ENCODE measurements at regions of chr2 and their contacts with region 1.

Region 1: GRCh38 chr2:9895669-9896595 is 52.7 kb downstream of the TAF1B start:
- DNase-seq: no peak
- H3K4me3 ChIP-seq: no peak overlapping the region
- H3K27me3 ChIP-seq: no peaks in the 10 kb centered on the region
- CTCF ChIP-seq: no peak

Region 2: GRCh38 chr2:9867881-9868280 is 28.1 kb before region 1 on chr2:
- CTCF ChIA-PET with region 1: no interaction called
- POLR2A ChIA-PET with region 1: interaction called, 10 read pairs
- DNase-seq: no peak
- H3K4me3 ChIP-seq: no peak overlapping the region
- H3K27me3 ChIP-seq: no peaks in the 10 kb centered on the region
- CTCF ChIP-seq: no peak

Region 3: DNA sequence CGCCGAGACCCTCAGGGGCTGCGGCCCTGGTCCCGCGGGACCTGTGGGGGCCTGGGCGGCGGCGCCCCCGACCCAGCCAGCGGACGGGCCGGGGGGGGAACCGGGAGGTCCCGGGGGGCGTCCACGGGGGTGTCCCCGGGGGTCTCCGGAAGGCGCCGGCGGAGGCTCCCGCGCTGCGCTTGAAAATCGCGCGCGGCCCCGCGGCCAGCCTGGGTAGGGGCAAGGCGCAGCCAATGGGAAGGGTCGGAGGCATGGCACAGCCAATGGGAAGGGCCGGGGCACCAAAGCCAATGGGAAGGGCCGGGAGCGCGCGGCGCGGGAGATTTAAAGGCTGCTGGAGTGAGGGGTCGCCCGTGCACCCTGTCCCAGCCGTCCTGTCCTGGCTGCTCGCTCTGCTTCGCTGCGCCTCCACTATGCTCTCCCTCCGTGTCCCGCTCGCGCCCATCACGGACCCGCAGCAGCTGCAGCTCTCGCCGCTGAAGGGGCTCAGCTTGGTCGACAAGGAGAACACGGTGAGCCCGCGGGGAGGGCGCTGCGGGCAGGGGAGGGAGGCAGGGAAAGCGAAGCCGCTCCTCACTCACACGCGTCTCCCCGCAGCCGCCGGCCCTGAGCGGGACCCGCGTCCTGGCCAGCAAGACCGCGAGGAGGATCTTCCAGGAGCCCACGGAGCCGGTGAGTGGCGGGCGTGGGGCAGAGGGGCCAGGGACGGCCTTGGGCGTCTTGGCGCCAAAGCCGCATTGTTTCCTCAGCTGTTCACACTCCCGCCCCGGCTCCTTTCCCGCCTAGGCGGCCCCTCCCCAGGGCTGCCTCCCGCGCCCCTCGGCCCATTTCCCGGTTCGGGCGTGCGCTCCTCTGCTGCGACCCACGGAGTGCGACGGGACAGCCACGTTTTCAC is 226.7 kb after region 1 on chr2 and contains the start of gene RRM2:
- CTCF ChIA-PET with region 1: no interaction called
- POLR2A ChIA-PET with region 1: no interaction called
- DNase-seq: no peak
- H3K4me3 ChIP-seq: peak within 1 kb of the TSS; percentile 80
- H3K27me3 ChIP-seq: no peaks in the 10 kb centered on the region
- CTCF ChIP-seq: no peak
- polyA plus RNA-seq, gene RRM2: 23.5 and 31.8 TPM in 2 replicates

Measured in BJ (cell line).